ENCODE measurements at regions of chr10 and their contacts with region 1.

Region 1: DNA sequence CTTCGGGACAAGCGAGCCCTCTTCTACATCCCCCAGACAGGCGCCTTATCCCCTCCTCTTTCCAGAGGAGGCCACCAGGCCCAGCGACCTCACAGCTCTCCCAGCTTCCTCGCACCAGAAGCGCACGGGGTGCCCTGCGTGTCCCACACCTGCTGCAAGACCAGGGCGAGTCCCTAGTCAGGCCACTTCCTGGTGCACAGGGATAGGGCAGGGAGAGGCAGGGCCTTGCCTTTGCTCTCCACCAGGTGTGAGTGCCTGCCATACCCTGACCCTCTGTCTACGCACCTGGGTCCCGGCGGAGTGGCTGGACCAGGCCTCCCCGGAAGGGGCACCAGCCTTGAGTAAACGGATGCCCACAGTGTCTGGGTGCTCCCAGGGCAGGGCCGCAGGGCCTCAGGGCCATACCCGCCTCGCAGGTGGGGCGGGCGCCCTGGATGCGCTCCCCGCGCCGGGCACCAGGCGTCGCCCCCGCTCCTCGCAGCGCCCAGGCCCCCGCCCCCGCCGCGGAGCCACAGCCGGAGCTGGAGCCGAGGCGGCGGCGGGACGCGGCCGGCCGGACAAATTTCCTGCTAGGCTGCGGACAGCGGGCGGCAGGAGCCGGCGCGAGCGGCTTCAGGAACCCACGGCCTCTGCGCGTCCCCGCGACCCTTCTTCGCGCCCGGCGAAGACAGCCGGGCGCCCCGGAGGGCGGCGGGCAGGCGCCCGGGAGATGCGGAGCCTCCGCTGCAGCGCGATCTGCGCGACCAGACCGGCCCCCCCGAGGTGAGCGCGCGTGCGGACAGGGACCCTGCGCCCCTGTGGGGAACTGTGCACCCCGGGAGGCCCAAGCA is at the start of gene PTPRE:
- DNase-seq: no peak
- ATAC-seq: peak; percentile 99
- H3K4me3 ChIP-seq: peak within 1 kb of the TSS; percentile 44 to 48
- H3K27ac ChIP-seq: no peak within 1 kb of the TSS
- H3K4me1 ChIP-seq: peaks cover 6% of the 10 kb centered on the region
- H3K27me3 ChIP-seq: peaks cover 9% of the 10 kb centered on the region
- CTCF ChIP-seq: peak; percentile 99
- total RNA-seq, gene PTPRE: 0.44 TPM

Region 2: GRCh38 chr10:128011175-128011979 is 104.6 kb after region 1 on chr10:
- CTCF ChIA-PET with region 1: interaction called, 25 read pairs
- POLR2A ChIA-PET with region 1: no interaction called
- in situ Hi-C with region 1: no loop called
- intact Hi-C with region 1: loop called (anchors 1 kb)
- DNase-seq: peak; percentile 58
- ATAC-seq: peak; percentile 89
- H3K4me3 ChIP-seq: no peak overlapping the region
- H3K27ac ChIP-seq: no peak overlapping the region
- H3K4me1 ChIP-seq: peaks cover 4% of the 10 kb centered on the region; the same call in 1 of the 2 replicates
- H3K27me3 ChIP-seq: peaks cover 5% of the 10 kb centered on the region; the same call in 1 of the 2 replicates
- CTCF ChIP-seq: peak; percentile 99

Region 3: GRCh38 chr10:128150045-128150493 is 243.3 kb after region 1 on chr10:
- CTCF ChIA-PET with region 1: no interaction called
- POLR2A ChIA-PET with region 1: no interaction called
- in situ Hi-C with region 1: no loop called
- intact Hi-C with region 1: loop called (anchors 10 kb)
- DNase-seq: no peak
- ATAC-seq: peak; percentile 99
- H3K4me3 ChIP-seq: peak overlapping the region; percentile 50 to 76
- H3K27ac ChIP-seq: peak overlapping the region; percentile 26; the same call in 1 of the 2 replicates
- H3K4me1 ChIP-seq: no peaks in the 10 kb centered on the region
- H3K27me3 ChIP-seq: peaks cover 4% of the 10 kb centered on the region; the same call in 1 of the 2 replicates
- CTCF ChIP-seq: peak; percentile 100

Region 4: GRCh38 chr10:128310971-128311658 is 404.4 kb after region 1 on chr10:
- CTCF ChIA-PET with region 1: no interaction called
- POLR2A ChIA-PET with region 1: no interaction called
- in situ Hi-C with region 1: no loop called
- intact Hi-C with region 1: no loop called
- DNase-seq: no peak
- ATAC-seq: no peak
- H3K4me3 ChIP-seq: no peak overlapping the region
- H3K27ac ChIP-seq: no peak overlapping the region
- H3K4me1 ChIP-seq: no peaks in the 10 kb centered on the region
- H3K27me3 ChIP-seq: peaks cover 6% of the 10 kb centered on the region
- CTCF ChIP-seq: no peak